ENCODE measurements at regions of chrX and their contacts with region 1.

Region 1: DNA sequence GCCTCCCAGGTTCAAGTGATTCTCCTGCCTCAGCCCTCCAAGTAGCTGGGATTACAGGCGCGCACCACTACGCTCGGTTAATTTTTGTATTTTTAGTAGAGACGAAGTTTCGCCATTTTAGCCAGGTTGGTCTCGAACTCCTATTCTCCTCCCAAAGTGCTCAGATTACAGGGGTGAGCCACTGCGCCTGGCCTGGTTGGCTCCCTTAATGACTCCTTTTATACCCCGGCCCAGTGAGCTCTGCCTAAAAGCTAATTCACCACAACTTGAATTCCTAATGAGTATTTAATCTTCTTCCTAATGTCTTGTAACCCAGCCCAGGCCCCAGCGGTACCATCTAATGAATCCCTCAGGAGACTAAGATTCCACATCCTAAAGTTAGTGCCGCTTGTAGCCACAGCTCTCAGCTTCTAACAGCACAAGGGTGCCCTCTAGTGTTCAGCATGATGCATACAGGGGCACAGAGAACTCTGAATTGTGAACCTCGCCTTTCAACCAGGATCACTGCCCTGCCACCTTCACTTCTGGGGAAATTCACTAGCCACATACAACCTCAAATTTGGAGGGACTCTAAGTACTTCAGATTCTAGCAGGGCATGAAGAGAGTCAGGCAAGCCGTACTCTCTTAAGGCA is 89.5 kb downstream of the OR13H1 start:
- DNase-seq: peak; percentile 44 to 65
- H3K4me3 ChIP-seq: no peak overlapping the region
- H3K4me3 Mint-ChIP-seq: no peak overlapping the region
- H3K27ac Mint-ChIP-seq: no peak overlapping the region
- H3K4me1 ChIP-seq: no peaks in the 10 kb centered on the region
- H3K4me1 Mint-ChIP-seq: no peaks in the 10 kb centered on the region
- H3K27me3 ChIP-seq: no peaks in the 10 kb centered on the region
- H3K27me3 Mint-ChIP-seq: peaks cover 2% of the 10 kb centered on the region
- CTCF ChIP-seq: peak; percentile 51 to 73

Region 2: GRCh38 chrX:130975947-130976346 is 657.5 kb before region 1 on chrX:
- CTCF ChIA-PET with region 1: no interaction called
- POLR2A ChIA-PET with region 1: no interaction called
- intact Hi-C with region 1: loop called (anchors 1 kb)
- DNase-seq: peak; percentile 32 to 35
- H3K4me3 ChIP-seq: no peak overlapping the region
- H3K4me3 Mint-ChIP-seq: no peak overlapping the region
- H3K27ac Mint-ChIP-seq: no peak overlapping the region
- H3K4me1 ChIP-seq: no peaks in the 10 kb centered on the region
- H3K4me1 Mint-ChIP-seq: no peaks in the 10 kb centered on the region
- H3K27me3 ChIP-seq: no peaks in the 10 kb centered on the region
- H3K27me3 Mint-ChIP-seq: peaks cover 6% of the 10 kb centered on the region
- CTCF ChIP-seq: peak in 1 of 2 experiments; percentile 43

Region 3: DNA sequence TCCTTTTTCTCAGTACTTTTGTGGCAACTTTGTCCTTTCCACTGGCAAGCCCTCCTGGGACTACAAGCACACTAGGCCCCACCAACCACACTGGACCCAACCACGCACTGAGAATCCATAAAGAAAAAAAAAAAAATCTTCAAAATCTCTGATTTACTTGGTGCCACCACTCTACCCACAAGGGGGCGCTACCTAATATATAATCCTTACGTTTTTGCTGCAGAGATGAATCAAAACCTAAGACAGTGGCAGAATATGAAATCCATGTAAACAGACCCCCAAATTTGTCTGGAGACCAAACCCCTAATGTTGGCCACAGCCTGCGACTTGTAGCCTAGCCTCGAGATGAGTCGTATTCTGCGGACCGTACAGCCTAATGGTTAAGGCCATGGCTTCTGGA is 638.7 kb before region 1 on chrX:
- CTCF ChIA-PET with region 1: no interaction called
- POLR2A ChIA-PET with region 1: no interaction called
- intact Hi-C with region 1: loop called (anchors 1 kb)
- DNase-seq: peak; percentile 24 to 26
- H3K4me3 ChIP-seq: no peak overlapping the region
- H3K4me3 Mint-ChIP-seq: no peak overlapping the region
- H3K27ac Mint-ChIP-seq: no peak overlapping the region
- H3K4me1 ChIP-seq: no peaks in the 10 kb centered on the region
- H3K4me1 Mint-ChIP-seq: no peaks in the 10 kb centered on the region
- H3K27me3 ChIP-seq: no peaks in the 10 kb centered on the region
- H3K27me3 Mint-ChIP-seq: peaks cover 6% of the 10 kb centered on the region
- CTCF ChIP-seq: peak in 1 of 2 experiments; percentile 44

Region 4: DNA sequence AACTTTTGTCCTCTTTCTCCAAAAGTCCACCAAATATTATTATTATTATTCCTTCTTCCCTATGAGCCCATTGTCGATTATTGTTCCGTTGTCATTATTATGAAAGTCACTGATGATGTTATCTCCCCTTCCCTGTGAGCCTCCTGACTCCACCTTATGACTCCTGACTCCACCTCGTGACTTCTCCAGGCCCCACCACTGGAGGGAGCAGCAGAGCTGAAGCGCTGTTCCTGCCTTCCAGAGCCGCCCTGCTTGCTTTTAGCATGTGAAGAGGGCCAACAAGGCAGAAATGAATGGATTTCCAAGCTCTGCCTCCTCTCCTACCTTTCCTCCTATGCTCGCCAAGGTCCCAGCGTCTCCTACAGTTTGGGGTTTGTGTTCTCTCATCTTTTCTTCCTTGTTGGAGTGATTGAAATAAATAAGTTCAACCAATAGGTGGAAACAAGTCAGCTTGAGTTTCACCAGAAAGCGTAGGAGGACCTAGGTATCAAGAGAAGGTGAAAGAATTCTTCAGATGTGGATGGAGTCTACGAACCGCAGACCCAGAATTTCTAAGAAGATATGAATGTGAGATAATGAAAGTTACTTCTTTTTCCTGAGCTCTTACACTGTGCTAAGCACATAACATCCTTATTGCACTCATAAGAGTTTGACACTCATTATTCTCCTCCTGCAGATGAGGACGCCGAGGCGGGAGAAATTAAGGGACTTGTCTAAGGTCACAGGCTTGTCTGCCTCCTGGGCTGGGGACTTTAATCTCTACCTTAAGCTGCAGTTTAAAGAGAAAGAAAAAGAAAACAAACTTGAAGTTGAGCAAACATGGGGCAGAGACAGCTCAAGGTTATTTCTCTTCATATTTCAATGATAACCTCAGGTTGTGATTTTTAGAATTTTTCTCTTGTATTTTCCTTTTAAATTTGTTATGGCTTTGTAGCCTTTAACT is 370.4 kb before region 1 on chrX:
- CTCF ChIA-PET with region 1: no interaction called
- POLR2A ChIA-PET with region 1: no interaction called
- intact Hi-C with region 1: loop called (anchors 1 kb)
- DNase-seq: peak; percentile 43 to 64
- H3K4me3 ChIP-seq: no peak overlapping the region
- H3K4me3 Mint-ChIP-seq: no peak overlapping the region
- H3K27ac Mint-ChIP-seq: no peak overlapping the region
- H3K4me1 ChIP-seq: no peaks in the 10 kb centered on the region; the same call in 1 of the 2 replicates
- H3K4me1 Mint-ChIP-seq: no peaks in the 10 kb centered on the region
- H3K27me3 ChIP-seq: no peaks in the 10 kb centered on the region
- H3K27me3 Mint-ChIP-seq: no peaks in the 10 kb centered on the region
- CTCF ChIP-seq: peak; percentile 46 to 55

Region 5: DNA sequence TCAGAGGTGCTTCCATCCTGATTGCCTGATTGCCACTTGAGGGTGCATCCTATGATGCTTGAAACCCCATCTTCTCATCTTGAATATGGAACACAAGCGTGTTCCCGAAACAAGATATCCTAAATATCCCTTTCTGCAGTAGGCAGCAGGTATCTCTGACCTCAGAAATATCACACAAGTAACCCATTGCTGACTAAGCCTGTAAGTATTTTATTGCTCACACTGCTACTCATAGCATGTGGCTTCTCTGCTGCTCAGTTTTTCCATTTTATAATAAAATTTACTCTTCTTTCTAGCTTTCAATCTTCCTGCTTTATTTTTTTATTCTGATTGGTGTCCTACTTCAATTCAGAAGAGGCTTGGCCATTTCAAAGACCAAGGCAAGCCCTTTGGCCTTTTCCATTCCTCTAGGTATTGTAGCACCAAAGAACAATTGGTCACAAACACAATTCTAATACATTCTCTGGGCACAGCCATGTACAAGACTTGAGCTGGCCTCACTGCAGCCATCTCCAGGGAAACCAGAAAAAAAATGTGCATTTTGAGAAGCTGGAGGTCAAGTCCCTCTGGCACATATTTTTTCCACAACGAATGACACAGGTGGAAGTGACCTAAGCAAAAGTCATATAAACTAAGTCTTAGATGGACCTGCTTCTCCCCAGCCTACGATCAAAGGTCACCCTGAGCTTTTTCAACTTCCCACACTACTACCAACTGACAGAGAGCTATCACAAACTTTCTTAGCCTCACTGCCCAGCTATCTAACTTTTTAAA is 17.4 kb after region 1 on chrX:
- CTCF ChIA-PET with region 1: no interaction called
- POLR2A ChIA-PET with region 1: no interaction called
- intact Hi-C with region 1: no loop called
- DNase-seq: no peak
- H3K4me3 ChIP-seq: no peak overlapping the region
- H3K4me3 Mint-ChIP-seq: no peak overlapping the region
- H3K27ac Mint-ChIP-seq: no peak overlapping the region
- H3K4me1 ChIP-seq: no peaks in the 10 kb centered on the region
- H3K4me1 Mint-ChIP-seq: no peaks in the 10 kb centered on the region
- H3K27me3 ChIP-seq: no peaks in the 10 kb centered on the region
- H3K27me3 Mint-ChIP-seq: peaks cover 8% of the 10 kb centered on the region
- CTCF ChIP-seq: no peak

Region 6: GRCh38 chrX:131677655-131678628 is 44.5 kb after region 1 on chrX:
- CTCF ChIA-PET with region 1: no interaction called
- POLR2A ChIA-PET with region 1: no interaction called
- intact Hi-C with region 1: loop called (anchors 5 kb)
- DNase-seq: peak; percentile 42 to 48
- H3K4me3 ChIP-seq: no peak overlapping the region
- H3K4me3 Mint-ChIP-seq: no peak overlapping the region
- H3K27ac Mint-ChIP-seq: no peak overlapping the region
- H3K4me1 ChIP-seq: no peaks in the 10 kb centered on the region
- H3K4me1 Mint-ChIP-seq: no peaks in the 10 kb centered on the region
- H3K27me3 ChIP-seq: no peaks in the 10 kb centered on the region
- H3K27me3 Mint-ChIP-seq: no peaks in the 10 kb centered on the region
- CTCF ChIP-seq: peak; percentile 65 to 70

Region 7: GRCh38 chrX:131958724-131959123 is 325.3 kb after region 1 on chrX:
- CTCF ChIA-PET with region 1: no interaction called
- POLR2A ChIA-PET with region 1: no interaction called
- intact Hi-C with region 1: no loop called
- DNase-seq: no peak
- H3K4me3 ChIP-seq: no peak overlapping the region
- H3K4me3 Mint-ChIP-seq: no peak overlapping the region
- H3K27ac Mint-ChIP-seq: no peak overlapping the region
- H3K4me1 ChIP-seq: no peaks in the 10 kb centered on the region
- H3K4me1 Mint-ChIP-seq: no peaks in the 10 kb centered on the region
- H3K27me3 ChIP-seq: no peaks in the 10 kb centered on the region
- H3K27me3 Mint-ChIP-seq: peaks cover 22% of the 10 kb centered on the region
- CTCF ChIP-seq: no peak

Measured in Caco-2 (cell line).